Dendritic cell treated with granulocyte-macrophage colony-stimulating factor and Interleukin-4, amounts not matched to agents 40 ng/mL and 50 ng/mL, for 4 days (primary cell): ENCODE measurements at regions of chr1 and their contacts with region 1.

Region 1: DNA sequence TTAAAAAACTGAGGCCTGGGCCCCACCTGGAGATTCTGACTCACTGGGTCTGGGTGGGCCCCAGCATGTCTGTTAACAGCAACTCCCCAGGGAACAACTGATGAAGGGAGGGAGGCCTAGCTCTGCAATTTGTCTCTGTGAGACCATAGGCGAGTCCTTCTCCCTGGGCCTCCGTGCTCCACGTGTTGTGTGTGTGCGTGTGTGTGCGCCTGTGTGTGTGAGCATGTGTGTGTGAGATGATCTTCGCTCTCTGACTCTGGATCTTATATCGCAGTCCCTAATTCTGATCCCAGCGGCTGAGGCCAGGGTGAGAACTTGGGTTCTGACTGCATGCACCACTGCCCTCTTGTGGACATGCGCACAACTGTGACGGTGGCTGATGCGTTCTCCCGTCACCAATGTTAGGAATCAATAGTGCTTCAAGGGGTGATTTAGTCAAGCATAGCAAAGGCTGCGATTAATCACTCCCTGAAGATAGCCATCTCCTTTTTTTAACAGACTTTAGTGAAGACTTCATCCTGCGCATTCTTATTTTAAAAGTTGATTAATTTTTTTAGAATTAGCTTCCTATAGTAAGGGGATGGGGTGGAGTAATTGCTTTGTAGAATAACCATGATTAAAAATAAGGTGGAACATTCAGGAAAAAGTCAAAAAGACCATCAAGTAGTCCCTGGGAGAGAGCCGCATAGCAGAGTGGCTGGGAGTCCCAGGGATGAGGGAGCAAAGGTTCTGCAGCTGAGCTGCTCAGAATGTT is 62.4 kb upstream of the USP24 start:
- H3K4me3 Mint-ChIP-seq: no peak overlapping the region
- H3K27ac Mint-ChIP-seq: peak overlapping the region; percentile 68
- H3K4me1 Mint-ChIP-seq: peaks cover 26% of the 10 kb centered on the region
- H3K27me3 Mint-ChIP-seq: peaks cover 15% of the 10 kb centered on the region

Region 2: DNA sequence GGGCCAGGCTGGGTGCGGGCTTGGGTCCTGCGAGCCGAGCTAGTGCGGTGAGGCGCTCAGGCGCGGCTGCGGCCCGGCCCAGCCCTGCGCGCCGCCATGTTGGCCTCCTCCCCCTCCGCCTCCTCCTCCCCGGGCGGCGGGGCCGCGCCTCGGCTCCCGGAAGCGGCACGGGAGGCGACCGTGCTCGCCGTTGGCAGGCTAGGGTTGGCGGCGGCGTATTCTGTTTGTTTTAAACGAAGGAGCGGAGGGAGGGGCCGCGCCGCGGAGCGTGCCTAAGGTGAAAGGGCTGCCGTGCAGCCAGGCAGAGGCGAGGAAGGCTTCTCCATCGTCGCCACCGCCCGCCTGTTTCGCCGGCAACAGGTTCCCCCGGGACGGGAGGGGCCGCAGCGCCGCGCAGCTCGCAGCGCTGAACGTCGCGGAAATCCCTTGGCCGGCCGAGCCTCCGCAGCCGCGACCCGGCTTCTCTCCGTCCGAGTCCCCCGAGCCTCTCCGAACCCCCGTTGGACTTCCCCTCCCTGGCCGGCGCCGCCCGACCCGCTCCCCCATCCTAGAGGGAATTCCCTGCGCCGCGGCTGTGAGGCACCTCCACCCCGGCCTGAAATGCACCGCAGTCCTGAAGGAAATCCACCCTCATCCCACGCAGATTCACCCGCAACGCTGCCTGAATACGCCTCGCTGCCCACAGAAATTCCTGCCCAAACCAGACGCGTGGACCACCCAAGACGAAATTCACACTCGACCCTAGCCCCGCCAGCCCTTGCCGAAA is 62.1 kb before region 1 on chr1 and contains the start of gene USP24:
- intact Hi-C with region 1: loop called (anchors 2 kb)
- H3K4me3 Mint-ChIP-seq: peak within 1 kb of the TSS; percentile 91
- H3K27ac Mint-ChIP-seq: peak within 1 kb of the TSS; percentile 92
- H3K4me1 Mint-ChIP-seq: peaks cover 69% of the 10 kb centered on the region
- H3K27me3 Mint-ChIP-seq: no peaks in the 10 kb centered on the region

Region 3: GRCh38 chr1:55362558-55362957 is 85.0 kb after region 1 on chr1:
- intact Hi-C with region 1: no loop called
- H3K4me3 Mint-ChIP-seq: no peak overlapping the region
- H3K27ac Mint-ChIP-seq: no peak overlapping the region
- H3K4me1 Mint-ChIP-seq: peaks cover 9% of the 10 kb centered on the region
- H3K27me3 Mint-ChIP-seq: peaks cover 3% of the 10 kb centered on the region

Region 4: DNA sequence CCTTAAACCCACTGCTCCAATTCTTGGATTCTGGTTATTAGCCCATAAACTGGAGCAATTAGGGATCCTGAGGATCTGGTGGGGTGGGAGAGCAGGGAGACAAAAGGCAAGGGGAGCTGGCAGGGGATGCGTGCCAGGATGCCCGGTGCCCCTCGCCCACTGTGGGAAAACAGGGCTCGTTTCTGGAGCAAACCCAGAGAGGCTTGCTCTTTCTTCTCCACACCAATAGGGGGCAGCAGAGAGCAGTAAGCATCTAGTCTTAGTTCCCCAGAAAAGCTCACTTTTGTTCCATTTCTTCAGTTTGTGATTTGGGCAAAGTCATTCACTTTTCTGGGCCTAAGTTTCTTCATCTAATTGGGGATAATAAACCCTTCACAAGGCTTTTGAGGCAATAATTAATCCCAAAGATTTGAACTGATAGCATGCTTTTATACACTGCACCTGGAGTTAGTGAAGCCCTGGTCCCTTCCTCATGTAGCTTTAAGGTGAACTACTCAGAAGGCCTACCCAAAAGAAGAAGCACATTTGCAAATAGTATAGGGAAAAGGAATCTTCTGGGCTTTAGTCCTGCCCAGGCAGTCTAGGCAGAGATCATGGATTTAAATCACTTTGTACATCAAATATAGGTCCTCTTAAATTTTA is 98.2 kb after region 1 on chr1:
- intact Hi-C with region 1: no loop called
- H3K4me3 Mint-ChIP-seq: no peak overlapping the region
- H3K27ac Mint-ChIP-seq: no peak overlapping the region
- H3K4me1 Mint-ChIP-seq: no peaks in the 10 kb centered on the region
- H3K27me3 Mint-ChIP-seq: peaks cover 1% of the 10 kb centered on the region

Region 5: GRCh38 chr1:55472784-55473183 is 195.2 kb after region 1 on chr1:
- intact Hi-C with region 1: no loop called
- H3K4me3 Mint-ChIP-seq: no peak overlapping the region
- H3K27ac Mint-ChIP-seq: peak overlapping the region; percentile 70
- H3K4me1 Mint-ChIP-seq: peaks cover 47% of the 10 kb centered on the region
- H3K27me3 Mint-ChIP-seq: peaks cover 9% of the 10 kb centered on the region